Panc1 (cell line): ENCODE measurements at regions of chr16 and their contacts with region 1.

Region 1: DNA sequence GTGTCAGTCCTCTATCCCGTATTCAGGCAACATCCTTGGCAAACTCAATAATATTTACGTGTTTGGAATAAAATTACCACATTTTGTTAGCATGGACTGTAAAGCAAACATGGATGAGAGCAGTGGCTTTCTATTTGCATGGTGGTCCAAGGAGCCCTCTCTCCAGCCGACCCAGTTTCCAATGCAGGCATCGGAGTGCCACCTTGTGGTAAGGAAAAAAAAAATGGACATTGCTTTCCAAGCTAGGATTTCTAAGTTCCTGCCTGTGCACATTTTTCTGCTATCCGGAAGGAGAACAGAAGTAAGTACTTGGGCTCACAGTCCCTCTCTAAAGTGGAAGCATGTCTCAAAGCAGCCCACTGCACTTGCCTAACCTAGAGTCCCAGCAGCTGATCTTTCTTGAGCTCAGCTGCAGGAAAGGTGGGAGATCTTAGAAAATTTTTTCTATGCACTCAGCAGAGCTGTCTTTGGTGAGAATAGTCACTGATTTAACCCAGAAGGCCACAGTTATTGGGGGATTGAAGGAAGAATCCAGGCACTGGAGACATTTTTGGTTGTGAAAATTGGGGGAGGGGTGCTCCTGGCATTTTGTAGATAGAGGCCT is 46.0 kb upstream of the ERCC4 start:
- DNase-seq: no peak
- ATAC-seq: peak; percentile 60; the same call in 1 of the 2 replicates
- H3K4me3 ChIP-seq: no peak overlapping the region
- H3K27ac ChIP-seq: no peak overlapping the region
- H3K4me1 ChIP-seq: no peaks in the 10 kb centered on the region
- H3K27me3 ChIP-seq: peaks cover 20% of the 10 kb centered on the region
- CTCF ChIP-seq: peak; percentile 88

Region 2: DNA sequence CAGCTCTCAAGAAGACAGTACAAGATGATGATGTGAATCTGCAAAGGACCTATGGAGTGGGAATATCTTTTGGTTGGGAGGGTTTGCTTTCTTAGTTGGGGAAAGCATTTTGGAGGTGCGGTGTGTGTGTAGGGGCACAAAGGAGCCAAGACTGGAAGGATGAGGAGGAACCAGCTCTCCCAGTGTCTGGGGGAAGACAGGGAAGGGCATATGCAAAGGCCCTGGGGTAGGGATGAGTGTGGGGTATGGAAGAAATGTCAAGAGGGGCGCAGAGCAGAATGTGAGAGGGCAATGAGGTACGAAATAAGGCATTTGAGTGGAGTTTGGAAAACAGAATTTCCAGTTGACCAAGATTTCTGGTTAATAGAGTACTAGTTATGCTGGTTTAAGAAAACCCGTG is 1710.0 kb before region 1 on chr16:
- CTCF ChIA-PET with region 1: no interaction called
- POLR2A ChIA-PET with region 1: interaction called, 10 read pairs
- in situ Hi-C with region 1: no loop called
- intact Hi-C with region 1: no loop called
- DNase-seq: no peak
- ATAC-seq: no peak
- H3K4me3 ChIP-seq: no peak overlapping the region
- H3K27ac ChIP-seq: no peak overlapping the region
- H3K4me1 ChIP-seq: no peaks in the 10 kb centered on the region
- H3K27me3 ChIP-seq: no peaks in the 10 kb centered on the region
- CTCF ChIP-seq: no peak

Region 3: DNA sequence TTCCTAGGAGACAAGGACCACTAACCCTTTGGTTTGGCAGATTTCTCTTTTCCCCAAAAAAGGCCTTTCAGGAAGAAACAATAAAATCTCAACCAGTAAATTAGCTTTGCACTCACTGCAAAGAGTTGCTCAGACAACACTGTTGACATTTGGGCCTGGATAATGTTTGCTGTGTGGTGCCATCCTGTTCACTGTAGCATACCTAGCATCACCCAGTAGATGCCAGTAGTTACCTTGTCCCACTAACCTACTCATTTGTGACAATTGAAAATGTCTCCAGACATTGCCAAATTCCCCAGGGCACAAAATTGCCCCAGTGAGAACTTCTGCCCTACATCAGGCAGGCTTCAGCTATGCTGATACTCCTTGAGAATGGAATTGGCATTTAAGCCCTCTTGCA is 131.0 kb before region 1 on chr16:
- CTCF ChIA-PET with region 1: interaction called, 4 read pairs
- POLR2A ChIA-PET with region 1: no interaction called
- in situ Hi-C with region 1: no loop called
- intact Hi-C with region 1: loop called (anchors 5 kb)
- DNase-seq: no peak
- ATAC-seq: no peak
- H3K4me3 ChIP-seq: no peak overlapping the region
- H3K27ac ChIP-seq: no peak overlapping the region
- H3K4me1 ChIP-seq: no peaks in the 10 kb centered on the region
- H3K27me3 ChIP-seq: no peaks in the 10 kb centered on the region
- CTCF ChIP-seq: no peak